ENCODE measurements at regions of chr20 and their contacts with region 1.

Region 1: GRCh38 chr20:9286501-9287461 is 217.9 kb downstream of the PLCB4 start:
- DNase-seq: no peak
- ATAC-seq: no peak
- H3K4me3 ChIP-seq: no peak overlapping the region
- H3K27ac ChIP-seq: no peak overlapping the region
- H3K4me1 ChIP-seq: peaks cover 11% of the 10 kb centered on the region
- H3K27me3 ChIP-seq: no peaks in the 10 kb centered on the region
- CTCF ChIP-seq: no peak
- EP300 ChIP-seq: no peak
- POLR2A ChIP-seq: no peak
- RAD21 ChIP-seq: no peak

Region 2: GRCh38 chr20:9301129-9302090 is 14.6 kb after region 1 on chr20:
- CTCF ChIA-PET with region 1: no interaction called
- POLR2A ChIA-PET with region 1: no interaction called
- in situ Hi-C with region 1: no loop called
- intact Hi-C with region 1: loop called (anchors 1 kb)
- DNase-seq: peak; percentile 99
- ATAC-seq: peak; percentile 99
- H3K4me3 ChIP-seq: no peak overlapping the region
- H3K27ac ChIP-seq: no peak overlapping the region
- H3K4me1 ChIP-seq: peaks cover 27% of the 10 kb centered on the region
- H3K27me3 ChIP-seq: no peaks in the 10 kb centered on the region; a peak in 1 of 5 replicates
- CTCF ChIP-seq: no peak
- EP300 ChIP-seq: peak; percentile 88 to 97
- POLR2A ChIP-seq: no peak
- RAD21 ChIP-seq: no peak